Panc1 (cell line): ENCODE measurements at regions of chr1 and their contacts with region 1.

Region 1: GRCh38 chr1:159891275-159892157 is 8.4 kb downstream of the CFAP45 start:
- DNase-seq: peak; percentile 87
- ATAC-seq: peak; percentile 99
- H3K4me3 ChIP-seq: no peak overlapping the region
- H3K27ac ChIP-seq: peak overlapping the region; percentile 12; the same call in 1 of the 2 replicates
- H3K4me1 ChIP-seq: no peaks in the 10 kb centered on the region
- H3K27me3 ChIP-seq: no peaks in the 10 kb centered on the region
- CTCF ChIP-seq: peak; percentile 99

Region 2: DNA sequence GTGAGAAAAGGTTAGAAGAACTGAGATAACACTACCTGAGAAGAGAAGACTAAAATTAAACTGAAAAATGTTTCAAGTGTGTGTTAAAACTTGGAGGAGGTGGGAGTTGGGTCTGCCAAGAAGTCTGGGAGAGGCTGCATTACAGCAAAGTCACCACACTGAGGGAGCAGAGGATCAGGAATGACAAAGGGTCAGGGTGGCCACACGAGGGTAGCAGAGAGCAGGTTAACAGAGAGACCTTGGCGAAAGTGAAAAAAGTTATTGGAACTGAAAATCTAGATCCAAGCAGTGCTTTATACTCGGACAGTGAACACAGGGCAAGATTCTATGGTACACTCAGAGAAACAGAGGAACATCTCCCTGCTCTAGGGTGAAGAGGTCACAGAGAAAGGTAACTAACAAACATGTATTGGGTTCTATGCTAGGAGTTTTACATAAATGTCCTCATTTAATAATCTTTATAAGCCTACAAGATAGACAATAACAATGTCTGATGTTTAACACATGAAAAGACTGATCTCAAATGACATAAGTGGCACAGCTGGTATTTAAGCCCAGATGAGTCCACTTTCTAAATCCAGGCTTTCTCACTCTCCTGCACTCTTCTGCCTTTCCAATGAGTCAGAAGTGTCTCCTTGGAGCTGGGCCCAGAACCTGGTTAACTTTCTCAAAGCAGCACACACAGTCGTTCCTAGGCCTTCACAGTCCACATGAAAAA is 730.4 kb before region 1 on chr1:
- CTCF ChIA-PET with region 1: interaction called, 3 read pairs
- POLR2A ChIA-PET with region 1: interaction called, 3 read pairs
- in situ Hi-C with region 1: no loop called
- intact Hi-C with region 1: loop called (anchors 10 kb)
- DNase-seq: peak; percentile 69
- ATAC-seq: peak; percentile 99
- H3K4me3 ChIP-seq: no peak overlapping the region
- H3K27ac ChIP-seq: no peak overlapping the region
- H3K4me1 ChIP-seq: no peaks in the 10 kb centered on the region
- H3K27me3 ChIP-seq: peaks cover 8% of the 10 kb centered on the region
- CTCF ChIP-seq: peak; percentile 95

Region 3: GRCh38 chr1:159214149-159214760 is 677.3 kb before region 1 on chr1:
- CTCF ChIA-PET with region 1: no interaction called
- POLR2A ChIA-PET with region 1: no interaction called
- in situ Hi-C with region 1: no loop called
- intact Hi-C with region 1: loop called (anchors 5 kb)
- DNase-seq: peak; percentile 42
- ATAC-seq: peak; percentile 83; the same call in 1 of the 2 replicates
- H3K4me3 ChIP-seq: no peak overlapping the region
- H3K27ac ChIP-seq: no peak overlapping the region
- H3K4me1 ChIP-seq: no peaks in the 10 kb centered on the region
- H3K27me3 ChIP-seq: peaks cover 3% of the 10 kb centered on the region
- CTCF ChIP-seq: peak; percentile 96

Region 4: DNA sequence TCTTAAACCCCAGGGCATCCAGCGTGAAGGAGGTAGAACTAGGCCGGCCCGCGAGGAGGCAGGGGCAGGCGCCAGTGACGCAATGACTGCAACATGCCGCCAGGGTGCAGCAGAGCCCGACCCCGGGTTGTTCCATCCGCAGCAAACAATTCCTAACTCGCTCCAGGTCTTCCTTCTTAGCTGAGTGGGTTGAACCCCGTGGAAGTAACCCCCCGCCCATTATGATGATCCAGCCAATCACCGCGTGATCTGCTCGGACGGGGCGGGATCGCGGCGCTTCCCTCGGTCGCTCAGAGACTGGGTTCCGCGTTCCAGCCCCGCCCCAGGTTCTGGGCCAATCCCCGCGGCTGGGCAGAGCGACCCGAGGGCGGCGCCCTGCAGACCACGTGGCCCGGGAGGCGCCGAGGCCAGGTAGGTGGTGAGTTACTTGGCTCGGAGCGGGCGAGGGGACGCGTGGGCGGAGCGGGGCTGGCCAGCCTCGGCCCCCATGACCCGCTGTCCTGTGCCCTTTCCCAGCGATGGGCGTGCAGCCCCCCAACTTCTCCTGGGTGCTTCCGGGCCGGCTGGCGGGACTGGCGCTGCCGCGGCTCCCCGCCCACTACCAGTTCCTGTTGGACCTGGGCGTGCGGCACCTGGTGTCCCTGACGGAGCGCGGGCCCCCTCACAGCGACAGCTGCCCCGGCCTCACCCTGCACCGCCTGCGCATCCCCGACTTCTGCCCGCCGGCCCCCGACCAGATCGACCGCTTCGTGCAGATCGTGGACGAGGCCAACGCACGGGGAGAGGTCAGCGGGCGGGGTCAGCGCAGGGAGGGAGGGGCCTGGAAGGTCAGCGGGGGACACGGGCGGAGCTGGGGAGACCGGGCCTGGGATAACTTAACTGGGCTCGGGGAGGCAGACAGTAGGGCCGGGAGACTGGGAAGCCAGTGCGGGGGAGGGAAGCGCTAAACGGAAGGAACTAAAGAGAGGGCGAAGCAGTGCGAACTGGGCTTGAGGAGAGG is 110.6 kb before region 1 on chr1 and contains the start of gene DUSP23:
- CTCF ChIA-PET with region 1: interaction called, 5 read pairs
- POLR2A ChIA-PET with region 1: no interaction called
- in situ Hi-C with region 1: no loop called
- intact Hi-C with region 1: loop called (anchors 5 kb)
- DNase-seq: peak; percentile 96
- ATAC-seq: peak; percentile 99
- H3K4me3 ChIP-seq: peak within 1 kb of the TSS; percentile 65 to 66
- H3K27ac ChIP-seq: peak within 1 kb of the TSS; percentile 81
- H3K4me1 ChIP-seq: no peaks in the 10 kb centered on the region
- H3K27me3 ChIP-seq: peaks cover 2% of the 10 kb centered on the region; the same call in 1 of the 2 replicates
- CTCF ChIP-seq: peak; percentile 94
- total RNA-seq, gene DUSP23: 36.1 TPM

Region 5: GRCh38 chr1:159798893-159799292 is 92.6 kb before region 1 on chr1:
- CTCF ChIA-PET with region 1: interaction called, 13 read pairs
- POLR2A ChIA-PET with region 1: no interaction called
- in situ Hi-C with region 1: no loop called
- intact Hi-C with region 1: loop called (anchors 1 kb)
- DNase-seq: peak; percentile 64
- ATAC-seq: peak; percentile 94
- H3K4me3 ChIP-seq: no peak overlapping the region
- H3K27ac ChIP-seq: no peak overlapping the region
- H3K4me1 ChIP-seq: no peaks in the 10 kb centered on the region
- H3K27me3 ChIP-seq: peaks cover 22% of the 10 kb centered on the region
- CTCF ChIP-seq: peak; percentile 83

Region 6: DNA sequence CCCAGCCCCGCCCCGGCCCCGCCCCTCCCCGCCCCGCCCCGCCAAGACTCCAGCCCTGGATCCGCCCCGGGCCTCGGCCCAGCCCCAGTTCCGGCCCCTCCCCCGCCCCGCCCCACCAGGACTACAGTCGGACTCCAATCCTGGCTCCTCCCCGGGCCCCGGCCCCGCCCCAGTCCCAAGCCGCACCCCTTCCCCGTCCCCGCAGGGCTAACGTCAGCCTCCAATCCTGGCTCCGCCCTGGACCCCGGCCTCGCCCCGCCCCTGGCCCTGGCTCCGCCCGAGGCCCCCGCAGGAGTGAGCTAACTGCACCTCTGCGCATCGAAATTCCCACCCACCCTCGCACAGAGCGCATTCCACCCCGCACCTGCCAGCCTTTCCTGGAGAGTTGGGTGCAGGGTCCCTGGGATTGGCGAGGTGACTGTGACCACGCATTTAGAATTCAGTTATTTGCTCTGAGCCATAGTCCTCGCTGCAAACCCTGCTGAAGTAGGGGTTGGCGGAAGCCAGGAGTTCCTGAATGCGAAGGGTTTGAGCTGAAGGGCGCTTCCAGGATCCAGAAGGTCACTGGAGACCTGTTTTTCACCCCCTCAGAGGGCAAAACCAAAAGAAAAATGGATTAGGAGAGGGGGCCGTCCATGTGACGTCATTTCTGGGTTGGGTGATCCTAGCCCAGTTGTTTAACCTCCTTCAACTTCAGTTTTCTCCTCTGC is 207.5 kb after region 1 on chr1:
- CTCF ChIA-PET with region 1: no interaction called
- POLR2A ChIA-PET with region 1: no interaction called
- in situ Hi-C with region 1: no loop called
- intact Hi-C with region 1: no loop called
- DNase-seq: no peak
- ATAC-seq: peak; percentile 92
- H3K4me3 ChIP-seq: peak overlapping the region; percentile 39 to 84
- H3K27ac ChIP-seq: peak overlapping the region; percentile 77
- H3K4me1 ChIP-seq: peaks cover 3% of the 10 kb centered on the region; the same call in 1 of the 2 replicates
- H3K27me3 ChIP-seq: no peaks in the 10 kb centered on the region
- CTCF ChIP-seq: no peak